Sciatic nerve (tissue), 2 donors: ENCODE measurements at regions of chr2 and their contacts with region 1.

Region 1: DNA sequence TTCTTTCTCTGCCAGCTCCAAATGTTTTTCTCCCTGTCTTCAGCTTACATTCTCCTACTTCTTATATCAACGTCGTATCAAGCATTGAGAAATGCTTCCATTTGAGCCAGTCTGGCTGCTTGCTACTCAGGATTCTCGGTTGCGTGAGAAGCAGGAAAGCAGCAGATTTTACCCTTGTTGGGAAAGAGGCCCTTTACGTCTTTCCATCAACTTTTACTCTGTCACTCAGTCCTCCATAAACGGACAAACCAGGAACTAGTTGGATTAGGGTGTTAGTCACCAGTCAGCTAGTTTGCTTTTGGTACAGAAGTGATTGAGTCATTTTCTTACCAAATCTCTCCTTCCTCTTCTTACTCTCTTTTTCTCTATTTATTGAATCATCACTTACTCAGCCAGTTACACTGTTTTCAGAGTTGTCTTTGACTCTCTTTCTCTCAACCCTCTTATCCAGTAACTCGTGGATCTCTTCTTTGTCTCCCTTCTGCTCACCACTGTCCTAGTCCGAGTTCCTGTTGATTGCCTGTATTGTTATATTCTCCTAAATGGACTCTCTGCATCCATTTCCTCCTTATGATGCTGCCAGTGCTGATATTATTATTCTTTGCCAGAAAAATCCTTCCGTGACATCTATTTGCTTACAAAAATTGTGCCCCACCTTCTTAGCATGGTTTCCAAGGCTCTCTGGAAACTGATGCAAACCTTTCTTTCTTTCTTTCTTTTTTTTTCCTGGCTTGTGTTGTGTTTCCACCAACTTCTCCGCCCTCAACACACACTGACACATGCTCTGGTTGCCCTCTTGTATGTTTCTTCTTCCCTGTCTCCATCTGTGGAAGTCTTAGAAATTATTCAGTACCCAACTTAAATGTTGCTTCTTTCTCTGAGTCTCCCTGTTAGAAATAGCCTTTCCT is 61.5 kb downstream of the VRK2 start:
- DNase-seq: no peak
- ATAC-seq: no peak

Region 2: GRCh38 chr2:58764338-58765104 is 656.5 kb after region 1 on chr2:
- intact Hi-C with region 1: loop called (anchors 5 kb)
- DNase-seq: no peak
- ATAC-seq: no peak